RWPE1 (cell line): ENCODE measurements at regions of chr20 and their contacts with region 1.

Region 1: DNA sequence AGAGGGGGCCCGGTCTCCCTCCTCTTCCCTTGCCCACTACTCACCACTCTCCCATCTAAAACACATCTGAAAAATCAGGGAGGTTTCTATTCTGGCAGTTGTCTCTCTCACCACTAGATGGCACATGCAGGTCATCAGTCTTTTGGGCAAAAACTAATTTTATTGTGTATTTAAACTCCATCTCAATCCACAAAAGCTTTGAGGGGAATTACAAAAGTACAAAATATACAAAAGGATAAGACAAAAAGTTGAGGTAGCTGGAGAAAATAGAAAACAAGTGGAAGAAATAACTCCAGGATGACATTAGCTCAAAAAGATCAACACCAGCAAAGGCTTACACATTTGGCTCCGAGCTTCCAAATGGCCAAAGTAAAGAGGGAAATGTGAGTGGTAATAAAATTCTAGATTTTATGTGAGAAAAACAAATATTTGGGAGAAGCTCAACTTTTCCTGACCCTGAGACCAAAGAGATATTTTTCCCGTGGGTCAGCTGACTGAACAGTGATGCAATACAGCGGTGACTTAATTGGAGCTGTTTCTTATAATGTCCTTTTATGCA is 79.8 kb upstream of the CHD6 start:
- DNase-seq: peak; percentile 51
- H3K27ac ChIP-seq: no peak overlapping the region
- CTCF ChIP-seq: peak; percentile 99

Region 2: GRCh38 chr20:41717483-41717882 is 19.5 kb after region 1 on chr20:
- CTCF ChIA-PET with region 1: interaction called, 15 read pairs
- POLR2A ChIA-PET with region 1: no interaction called
- DNase-seq: no peak
- H3K27ac ChIP-seq: no peak overlapping the region
- CTCF ChIP-seq: no peak

Region 3: DNA sequence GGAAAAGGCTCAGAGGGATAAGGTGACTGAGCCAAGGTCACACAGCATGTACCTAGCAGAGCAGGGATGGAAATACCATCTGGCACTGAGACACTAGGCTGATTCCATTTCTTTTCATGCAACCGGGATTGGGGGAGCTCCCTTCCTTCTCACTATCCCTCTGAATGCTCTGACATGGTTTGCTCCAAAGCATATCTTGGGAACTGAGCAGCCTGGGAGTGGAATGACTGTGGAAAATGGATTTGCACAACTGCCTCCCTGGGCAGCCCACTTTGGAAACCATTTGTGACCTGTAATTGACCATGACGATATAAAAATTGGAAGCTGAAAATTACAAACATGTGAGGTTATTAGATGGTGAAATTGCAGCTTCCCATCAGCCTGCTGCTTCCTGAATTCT is 229.2 kb after region 1 on chr20:
- CTCF ChIA-PET with region 1: interaction called, 10 read pairs
- POLR2A ChIA-PET with region 1: no interaction called
- DNase-seq: no peak
- H3K27ac ChIP-seq: no peak overlapping the region
- CTCF ChIP-seq: no peak